ENCODE measurements at regions of chr18 and their contacts with region 1.

Region 1: DNA sequence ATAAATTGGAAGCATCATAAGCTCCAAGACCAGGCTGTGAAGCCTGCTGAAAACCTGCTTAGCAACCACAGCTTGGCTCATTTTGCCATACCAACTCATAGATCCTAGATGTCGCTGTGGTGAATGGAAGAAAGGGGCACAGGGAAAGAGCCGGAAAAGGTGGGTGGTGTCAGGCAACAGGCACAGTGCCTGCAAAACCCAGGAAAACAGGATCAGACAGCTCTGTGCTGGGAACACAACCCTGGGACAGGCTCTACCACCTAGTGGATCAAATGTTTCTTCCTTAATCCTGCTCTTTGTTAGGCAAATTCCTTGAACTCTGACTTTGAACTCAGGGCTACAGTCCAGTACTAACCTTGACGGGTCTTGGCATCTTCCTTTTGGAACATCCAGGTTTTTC is 31.6 kb downstream of the TWSG1 start:
- DNase-seq: peak; percentile 84
- H3K4me3 ChIP-seq: no peak overlapping the region
- H3K27ac ChIP-seq: no peak overlapping the region
- H3K4me1 ChIP-seq: peaks cover 10% of the 10 kb centered on the region
- H3K27me3 ChIP-seq: no peaks in the 10 kb centered on the region
- CTCF ChIP-seq: peak; percentile 45 to 69

Region 2: GRCh38 chr18:9454061-9454703 is 88.0 kb after region 1 on chr18:
- CTCF ChIA-PET with region 1: no interaction called
- dilution Hi-C with region 1: loop called (anchors 5 kb)
- in situ Hi-C with region 1: no loop called
- intact Hi-C with region 1: no loop called
- DNase-seq: peak; percentile 59
- H3K4me3 ChIP-seq: no peak overlapping the region
- H3K27ac ChIP-seq: peak overlapping the region; percentile 27
- H3K4me1 ChIP-seq: peaks cover 12% of the 10 kb centered on the region
- H3K27me3 ChIP-seq: no peaks in the 10 kb centered on the region
- CTCF ChIP-seq: no peak

Region 3: GRCh38 chr18:9578306-9578705 is 212.1 kb after region 1 on chr18:
- CTCF ChIA-PET with region 1: no interaction called
- dilution Hi-C with region 1: no loop called
- in situ Hi-C with region 1: no loop called
- intact Hi-C with region 1: no loop called
- DNase-seq: peak; percentile 24
- H3K4me3 ChIP-seq: no peak overlapping the region
- H3K27ac ChIP-seq: peak overlapping the region; percentile 22
- H3K4me1 ChIP-seq: peaks cover 5% of the 10 kb centered on the region
- H3K27me3 ChIP-seq: no peaks in the 10 kb centered on the region
- CTCF ChIP-seq: no peak

Region 4: GRCh38 chr18:9594823-9595596 is 228.8 kb after region 1 on chr18:
- CTCF ChIA-PET with region 1: interaction called, 11 read pairs
- dilution Hi-C with region 1: no loop called
- in situ Hi-C with region 1: no loop called
- intact Hi-C with region 1: no loop called
- DNase-seq: peak; percentile 85
- H3K4me3 ChIP-seq: peak overlapping the region; percentile 21 to 37 (median 26)
- H3K27ac ChIP-seq: peak overlapping the region; percentile 73
- H3K4me1 ChIP-seq: peaks cover 26% of the 10 kb centered on the region
- H3K27me3 ChIP-seq: no peaks in the 10 kb centered on the region
- CTCF ChIP-seq: no peak

Measured in mammary epithelial cell (primary cell).